Naive thymus-derived CD8-positive, alpha-beta T cell (primary cell): ENCODE measurements at regions of chr3 and their contacts with region 1.

Region 1: DNA sequence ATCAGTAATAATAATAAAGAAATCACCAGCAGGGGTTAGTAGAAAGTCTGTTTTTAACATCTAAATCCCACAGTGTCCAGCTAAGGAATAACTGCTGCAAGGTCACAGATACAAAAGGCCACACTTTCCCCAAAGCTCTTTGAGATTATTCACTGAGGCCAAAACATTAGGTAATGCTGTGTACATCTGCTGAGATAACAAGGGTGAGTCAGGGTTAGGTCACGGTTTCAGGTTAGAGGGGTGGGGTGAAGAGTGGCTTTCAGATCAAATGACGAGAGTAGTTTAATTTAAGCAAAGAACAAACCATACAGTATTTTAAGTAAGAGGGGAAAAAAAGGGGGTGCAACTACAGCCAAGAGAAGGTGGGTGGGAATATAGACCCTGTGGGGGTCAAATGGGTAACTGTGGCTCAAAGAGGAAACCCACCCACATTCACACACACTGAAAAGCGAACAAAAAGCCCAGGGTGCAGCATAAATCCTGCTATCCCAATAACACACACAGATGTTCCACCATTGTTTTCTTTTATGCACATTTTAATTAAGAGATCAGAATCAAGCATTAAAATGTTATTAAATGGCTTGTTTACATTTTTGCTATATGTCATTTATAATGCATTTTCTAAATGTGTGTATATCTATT is 412.9 kb downstream of the TIGIT start:
- DNase-seq: no peak
- ATAC-seq: no peak
- H3K4me3 Mint-ChIP-seq: no peak overlapping the region
- H3K27ac Mint-ChIP-seq: no peak overlapping the region
- H3K4me1 Mint-ChIP-seq: peaks cover 4 to 26% (median 12%) of the 10 kb centered on the region in 4 donors
- H3K27me3 Mint-ChIP-seq: no peaks in the 10 kb centered on the region

Region 2: GRCh38 chr3:114660124-114660523 is 46.6 kb before region 1 on chr3:
- POLR2A ChIA-PET with region 1: no interaction called
- DNase-seq: no peak
- ATAC-seq: no peak
- H3K4me3 Mint-ChIP-seq: no peak overlapping the region
- H3K27ac Mint-ChIP-seq: no peak overlapping the region
- H3K4me1 Mint-ChIP-seq: no peaks in the 10 kb centered on the region
- H3K27me3 Mint-ChIP-seq: no peaks in the 10 kb centered on the region

Region 3: DNA sequence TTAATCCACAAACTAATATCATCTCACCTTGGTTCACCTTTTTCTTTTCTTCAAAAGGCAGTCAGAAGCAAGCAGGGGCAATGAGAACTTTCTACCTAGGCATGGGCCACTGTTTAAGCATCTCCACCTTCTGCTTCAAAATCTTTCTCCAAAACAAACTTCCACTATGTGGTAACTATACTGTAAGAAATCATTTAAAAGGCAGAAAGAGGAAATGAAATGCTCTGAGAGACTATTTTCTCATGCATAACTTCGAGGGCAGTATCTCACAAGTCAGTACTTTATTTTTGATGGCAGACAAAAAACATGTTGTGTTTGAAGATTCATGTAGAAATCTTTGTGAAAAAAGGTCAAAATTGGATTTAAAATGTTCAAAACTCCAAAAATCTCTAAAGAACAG is 20.7 kb after region 1 on chr3:
- POLR2A ChIA-PET with region 1: interaction called, 10 read pairs
- DNase-seq: peak in 1 of 10 donors; percentile 1
- ATAC-seq: no peak
- H3K4me3 Mint-ChIP-seq: no peak overlapping the region
- H3K27ac Mint-ChIP-seq: no peak overlapping the region
- H3K4me1 Mint-ChIP-seq: peaks cover 7 to 15% (median 13%) of the 10 kb centered on the region in 4 donors
- H3K27me3 Mint-ChIP-seq: no peaks in the 10 kb centered on the region

Region 4: DNA sequence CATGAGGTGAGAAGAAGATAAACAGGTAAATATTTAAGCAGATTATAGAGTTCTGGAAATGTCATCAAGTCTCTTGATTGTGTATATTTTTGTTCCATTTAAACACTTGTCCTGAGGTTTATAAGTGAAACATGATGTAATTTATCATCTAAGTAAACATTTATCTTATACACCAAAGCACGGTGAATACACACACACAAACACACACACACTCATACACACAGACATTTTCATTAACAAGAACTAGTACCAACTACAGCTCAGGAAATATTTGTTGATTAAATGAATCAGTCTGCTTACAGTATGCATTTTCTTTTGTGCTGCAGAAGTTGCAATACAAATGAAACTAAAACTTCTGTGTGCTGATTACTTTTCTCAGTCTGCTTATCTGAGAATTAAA is 83.1 kb after region 1 on chr3:
- POLR2A ChIA-PET with region 1: no interaction called
- DNase-seq: no peak
- ATAC-seq: no peak
- H3K4me3 Mint-ChIP-seq: no peak overlapping the region
- H3K27ac Mint-ChIP-seq: no peak overlapping the region
- H3K4me1 Mint-ChIP-seq: peaks cover 0 to 21% (median 6%) of the 10 kb centered on the region in 4 donors
- H3K27me3 Mint-ChIP-seq: no peaks in the 10 kb centered on the region